Prostate gland (tissue), 2 donors: ENCODE measurements at regions of chr20 and their contacts with region 1.

Region 1: GRCh38 chr20:46757754-46758678 is 48.6 kb downstream of the SLC2A10 start:
- DNase-seq: peak; percentile 28
- H3K4me3 ChIP-seq: no peak overlapping the region
- H3K27ac ChIP-seq: no peak overlapping the region
- H3K4me1 ChIP-seq: no peaks in the 10 kb centered on the region
- H3K27me3 ChIP-seq: no peaks in the 10 kb centered on the region
- CTCF ChIP-seq: peak; percentile 93 to 95 (median 94)
- POLR2A ChIP-seq: no peak

Region 2: DNA sequence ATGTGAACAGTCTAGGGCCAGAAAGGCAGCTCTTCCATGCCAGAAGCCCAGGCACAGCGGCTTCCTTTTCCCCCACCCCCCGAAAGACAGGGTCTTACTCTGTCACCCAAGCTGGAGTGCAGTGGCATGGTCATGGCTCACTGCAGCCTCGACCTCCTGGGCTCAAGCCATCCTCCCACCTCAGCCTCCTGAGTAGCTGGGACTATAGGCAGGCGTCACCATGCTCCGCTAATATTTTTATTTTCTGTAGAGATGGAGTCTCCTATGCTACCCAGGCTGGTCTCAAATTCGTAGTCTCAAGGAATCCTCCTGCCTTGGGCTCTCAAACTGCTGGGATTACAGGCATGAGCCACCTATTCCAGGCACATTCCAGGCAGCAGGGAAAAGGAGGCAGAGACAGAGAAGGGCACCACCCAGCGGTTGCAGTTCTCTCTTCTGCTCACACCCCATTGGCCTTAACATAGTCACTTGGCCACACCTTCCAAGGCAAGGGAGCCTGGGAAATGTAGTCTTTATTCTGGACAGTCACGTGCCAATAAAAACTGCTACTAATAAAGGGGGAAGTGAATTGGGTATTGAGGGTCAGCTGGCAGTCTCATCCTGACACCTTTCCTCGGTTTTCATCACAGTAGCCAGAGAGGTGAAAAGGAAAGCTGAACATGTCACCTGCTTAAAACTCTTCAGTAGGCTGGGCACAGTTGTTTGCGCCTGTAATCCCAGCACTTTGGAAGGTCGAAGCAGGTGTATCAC is 392.6 kb after region 1 on chr20:
- intact Hi-C with region 1: loop called (anchors 5 kb)
- DNase-seq: peak; percentile 46
- H3K4me3 ChIP-seq: no peak overlapping the region
- H3K27ac ChIP-seq: no peak overlapping the region
- H3K4me1 ChIP-seq: no peaks in the 10 kb centered on the region
- H3K27me3 ChIP-seq: no peaks in the 10 kb centered on the region
- CTCF ChIP-seq: peak in 3 of 4 experiments; percentile 64 to 71 (median 70)
- POLR2A ChIP-seq: no peak

Region 3: DNA sequence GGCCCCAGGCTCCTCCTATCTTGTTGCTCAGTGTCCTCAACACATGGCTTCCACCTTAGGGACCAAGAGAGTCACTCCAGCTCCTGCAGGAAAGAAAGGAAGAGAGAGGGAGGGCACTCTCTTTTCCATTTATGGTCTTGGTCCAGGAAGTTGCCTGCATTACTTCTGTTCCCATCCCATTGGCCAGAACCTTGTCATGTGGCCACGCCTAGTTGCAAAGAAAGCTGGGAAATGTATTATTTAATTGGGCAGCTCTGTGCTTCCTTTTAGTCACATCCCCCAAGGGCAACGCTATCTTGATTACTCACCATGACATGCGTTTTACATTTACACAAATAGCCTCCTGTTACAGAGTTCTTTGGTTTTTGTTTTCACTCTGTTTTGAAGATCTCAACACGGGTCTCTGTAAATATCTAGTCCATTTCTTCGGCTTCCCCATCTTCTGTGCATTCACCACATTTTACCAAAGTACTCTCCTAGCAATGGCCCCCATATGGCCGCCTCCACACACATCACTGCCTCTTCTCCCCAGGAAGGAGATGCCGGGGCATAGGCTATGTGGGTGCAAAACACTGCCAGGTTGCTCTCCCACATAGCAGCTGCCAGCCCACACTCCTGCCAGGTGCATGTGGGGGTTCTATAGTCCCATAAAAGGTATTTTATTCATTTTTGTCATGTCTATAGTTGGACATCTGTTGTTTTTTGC is 634.2 kb after region 1 on chr20:
- intact Hi-C with region 1: loop called (anchors 10 kb)
- DNase-seq: no peak
- H3K4me3 ChIP-seq: no peak overlapping the region
- H3K27ac ChIP-seq: no peak overlapping the region
- H3K4me1 ChIP-seq: no peaks in the 10 kb centered on the region
- H3K27me3 ChIP-seq: no peaks in the 10 kb centered on the region
- CTCF ChIP-seq: no peak
- POLR2A ChIP-seq: no peak

Region 4: DNA sequence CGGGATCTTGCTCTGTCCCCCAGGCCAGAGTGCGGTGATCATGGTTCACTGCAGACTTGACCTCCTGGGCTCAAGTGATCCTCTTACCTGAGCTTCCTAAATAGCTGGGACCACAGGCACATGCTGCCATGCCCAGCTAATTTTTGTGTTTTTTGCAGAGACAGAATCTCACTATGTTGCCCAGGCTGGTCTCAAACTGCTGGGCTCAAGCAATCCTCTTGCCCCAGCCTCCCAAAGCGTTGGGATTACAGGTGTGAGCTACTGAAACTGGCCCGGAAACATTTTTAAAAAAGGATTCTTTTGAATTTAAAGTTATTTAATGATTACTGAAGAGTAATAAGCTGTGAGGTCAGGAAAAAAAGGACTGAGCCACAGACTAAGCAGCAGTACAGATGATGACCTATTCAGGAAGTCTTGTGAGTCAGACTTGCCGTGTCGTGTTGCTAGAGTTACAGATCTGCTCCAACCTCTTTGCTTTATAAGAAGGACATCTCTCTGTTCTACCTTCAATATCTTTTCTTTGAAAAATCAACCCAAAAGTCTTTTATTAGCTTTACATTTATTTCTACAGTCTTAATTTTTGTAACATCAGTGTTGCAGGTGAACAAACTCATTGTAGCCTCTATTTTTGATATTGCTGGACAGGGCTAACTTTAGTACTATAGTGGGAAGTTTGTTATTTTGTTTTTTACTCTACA is 852.4 kb after region 1 on chr20:
- intact Hi-C with region 1: loop called (anchors 10 kb)
- DNase-seq: no peak
- H3K4me3 ChIP-seq: no peak overlapping the region
- H3K27ac ChIP-seq: no peak overlapping the region
- H3K4me1 ChIP-seq: no peaks in the 10 kb centered on the region
- H3K27me3 ChIP-seq: no peaks in the 10 kb centered on the region
- CTCF ChIP-seq: no peak
- POLR2A ChIP-seq: no peak